ENCODE measurements at regions of chr14 and their contacts with region 1.

Region 1: DNA sequence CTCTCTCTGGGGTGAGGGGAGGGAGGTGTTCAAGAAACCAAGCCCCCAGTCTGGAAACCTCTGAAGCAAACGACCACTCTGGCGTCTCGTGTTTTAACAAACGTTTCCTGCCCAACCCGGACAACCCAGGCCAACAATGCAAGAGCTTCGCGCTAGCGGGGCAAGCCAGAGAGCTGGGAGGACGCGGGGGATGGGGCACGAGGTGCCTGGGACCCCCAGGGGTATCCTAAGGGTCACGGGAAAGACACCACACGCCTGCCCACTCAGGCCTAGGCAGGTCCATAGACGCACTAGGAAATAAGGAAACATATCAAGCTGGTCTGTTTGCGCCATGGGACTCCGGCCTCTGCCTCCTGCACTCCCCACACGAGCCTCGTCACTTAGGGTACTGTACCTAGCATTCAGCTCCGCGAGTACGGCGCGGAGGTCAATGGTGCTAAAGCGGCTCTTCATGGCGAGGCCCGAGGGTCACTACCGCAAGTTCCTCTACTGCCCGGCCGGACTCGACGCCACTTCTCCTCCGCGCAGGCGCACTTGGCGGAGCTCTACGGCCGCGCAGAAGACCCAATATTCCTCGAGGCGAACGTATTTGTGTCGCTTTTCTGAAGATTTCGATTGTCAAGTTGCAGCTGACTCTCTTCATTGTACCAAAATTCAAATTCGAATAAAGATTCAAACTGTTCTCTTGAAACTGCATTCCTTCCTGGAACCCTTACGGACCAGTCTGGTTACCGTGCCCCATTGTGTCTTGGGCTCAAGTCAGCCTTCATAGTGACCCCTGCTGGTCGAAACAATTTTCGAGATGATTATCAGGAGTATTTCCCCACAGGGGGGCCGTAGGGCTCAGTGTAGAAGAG is at the start of gene NEMF:
- DNase-seq: peak; percentile 58 to 85
- H3K4me3 ChIP-seq: peak within 1 kb of the TSS; percentile 84
- H3K27ac ChIP-seq: peak within 1 kb of the TSS; percentile 53
- H3K4me1 ChIP-seq: peaks cover 32% of the 10 kb centered on the region
- H3K27me3 ChIP-seq: no peaks in the 10 kb centered on the region
- CTCF ChIP-seq: peak; percentile 89
- total RNA-seq, gene NEMF: 49.7 and 67.6 TPM in 2 replicates

Region 2: GRCh38 chr14:50109342-50109741 is 256.8 kb after region 1 on chr14:
- CTCF ChIA-PET with region 1: interaction called, 3 read pairs
- POLR2A ChIA-PET with region 1: no interaction called
- intact Hi-C with region 1: loop called (anchors 1 kb)
- DNase-seq: no peak
- H3K4me3 ChIP-seq: no peak overlapping the region
- H3K27ac ChIP-seq: no peak overlapping the region
- H3K4me1 ChIP-seq: peaks cover 7% of the 10 kb centered on the region; the same call in 1 of the 2 replicates
- H3K27me3 ChIP-seq: no peaks in the 10 kb centered on the region
- CTCF ChIP-seq: peak; percentile 34

Region 3: DNA sequence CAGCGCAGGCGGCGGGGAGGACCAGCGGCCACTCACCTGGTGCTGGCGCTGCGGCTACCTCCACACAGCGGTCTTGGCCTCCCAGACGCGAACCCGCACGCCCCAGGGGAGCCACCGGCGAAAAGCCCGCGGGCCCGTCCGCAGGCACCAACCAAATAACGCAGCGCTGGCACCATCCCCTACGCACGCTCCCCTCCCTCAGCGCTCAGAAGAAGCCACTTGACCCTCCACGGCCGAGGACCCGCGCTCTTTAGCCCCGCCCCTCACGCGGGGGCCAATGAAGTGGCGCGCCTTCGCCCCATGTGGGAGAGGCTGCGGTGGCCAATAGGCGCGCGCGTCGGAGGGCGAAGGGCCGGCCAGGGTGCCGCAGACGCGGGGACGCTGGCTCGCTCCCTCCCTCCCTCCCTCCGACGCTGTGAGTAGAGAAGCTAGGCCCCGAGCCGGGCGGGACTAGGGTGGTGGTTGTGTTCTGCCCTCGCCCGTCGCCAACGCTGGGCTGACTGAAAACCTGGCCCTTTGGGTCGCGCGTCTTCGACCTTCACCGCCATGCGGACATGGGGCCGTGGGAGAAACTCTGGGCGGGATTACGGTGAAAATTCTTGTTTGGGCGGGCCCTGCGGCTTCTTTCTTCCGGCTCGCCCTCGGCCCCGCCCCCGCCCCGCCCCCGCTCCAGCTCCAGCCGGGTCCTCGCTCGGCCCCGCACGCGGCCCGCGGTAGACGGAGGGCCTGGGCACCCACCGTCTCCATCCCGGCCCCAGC is 459.6 kb after region 1 on chr14 and contains the starts of genes DMAC2L and L2HGDH:
- CTCF ChIA-PET with region 1: no interaction called
- POLR2A ChIA-PET with region 1: interaction called, 6 read pairs
- intact Hi-C with region 1: loop called (anchors 5 kb)
- DNase-seq: peak; percentile 83 to 95
- H3K4me3 ChIP-seq: peak within 1 kb of the TSS; percentile 85
- H3K27ac ChIP-seq: peak within 1 kb of the TSS; percentile 88
- H3K4me1 ChIP-seq: peaks cover 18% of the 10 kb centered on the region
- H3K27me3 ChIP-seq: no peaks in the 10 kb centered on the region
- CTCF ChIP-seq: peak; percentile 31
- total RNA-seq, gene DMAC2L: 15.4 and 18.5 TPM in 2 replicates
- total RNA-seq, gene L2HGDH: 15.5 and 18.6 TPM in 2 replicates

Region 4: GRCh38 chr14:50839048-50839447 is 986.5 kb after region 1 on chr14:
- CTCF ChIA-PET with region 1: interaction called, 14 read pairs
- POLR2A ChIA-PET with region 1: no interaction called
- intact Hi-C with region 1: no loop called
- DNase-seq: no peak
- H3K4me3 ChIP-seq: no peak overlapping the region
- H3K27ac ChIP-seq: no peak overlapping the region
- H3K4me1 ChIP-seq: no peaks in the 10 kb centered on the region
- H3K27me3 ChIP-seq: no peaks in the 10 kb centered on the region
- CTCF ChIP-seq: no peak